ENCODE measurements at regions of chr2 and their contacts with region 1.

Region 1: DNA sequence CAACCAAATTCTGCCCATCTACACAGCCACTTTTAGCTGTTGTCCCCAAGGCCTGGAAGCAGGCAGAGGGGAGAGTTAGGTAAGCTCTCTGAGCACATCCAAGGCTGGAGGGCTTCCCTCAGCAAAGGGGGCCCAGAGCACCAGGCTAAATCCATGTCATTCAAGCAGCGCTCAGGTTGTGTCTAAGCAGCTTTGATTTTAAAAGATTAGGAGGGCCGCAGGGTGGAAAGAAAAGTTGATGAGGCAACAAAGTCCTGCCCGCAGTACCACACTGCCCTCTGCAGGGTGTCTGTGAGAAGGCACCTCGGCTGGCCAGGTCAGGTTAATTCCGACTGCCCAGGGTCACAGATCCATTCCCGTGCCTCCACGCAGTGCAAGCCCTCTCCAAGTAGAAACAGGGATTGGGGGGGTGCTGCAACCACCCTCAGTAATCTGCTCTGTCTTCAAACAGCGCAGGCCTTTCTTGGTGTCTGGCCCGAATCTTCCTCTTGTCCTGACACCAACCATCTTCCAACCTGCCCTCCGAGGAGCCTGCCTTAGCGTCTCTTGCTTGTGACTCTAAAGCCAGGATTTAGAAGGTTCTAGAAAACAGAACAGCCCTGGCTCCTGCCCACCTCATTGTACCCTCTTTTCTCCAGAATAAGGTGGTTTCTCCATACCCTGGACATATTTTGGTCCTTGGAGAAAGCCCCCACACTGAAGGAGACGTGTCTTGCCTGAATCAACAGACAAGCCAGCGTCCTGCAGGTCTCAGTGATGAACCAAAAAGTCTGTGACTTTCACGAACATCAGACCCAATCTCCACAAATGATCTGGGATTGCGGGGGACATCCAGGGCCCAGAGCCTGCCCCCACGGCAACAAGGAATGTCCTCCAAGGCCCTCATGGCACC is 289.2 kb downstream of the TNS1 start:
- DNase-seq: no peak
- ATAC-seq: peak; percentile 91
- H3K4me3 ChIP-seq: no peak overlapping the region
- H3K27ac ChIP-seq: no peak overlapping the region
- H3K4me1 ChIP-seq: no peaks in the 10 kb centered on the region
- H3K27me3 ChIP-seq: peaks cover 2 to 3% of the 10 kb centered on the region in 2 experiments; a peak in 3 of 4 replicates
- CTCF ChIP-seq: peak; percentile 81 to 96 (median 91)
- EP300 ChIP-seq: no peak
- POLR2A ChIP-seq: no peak
- RAD21 ChIP-seq: peak; percentile 95

Region 2: DNA sequence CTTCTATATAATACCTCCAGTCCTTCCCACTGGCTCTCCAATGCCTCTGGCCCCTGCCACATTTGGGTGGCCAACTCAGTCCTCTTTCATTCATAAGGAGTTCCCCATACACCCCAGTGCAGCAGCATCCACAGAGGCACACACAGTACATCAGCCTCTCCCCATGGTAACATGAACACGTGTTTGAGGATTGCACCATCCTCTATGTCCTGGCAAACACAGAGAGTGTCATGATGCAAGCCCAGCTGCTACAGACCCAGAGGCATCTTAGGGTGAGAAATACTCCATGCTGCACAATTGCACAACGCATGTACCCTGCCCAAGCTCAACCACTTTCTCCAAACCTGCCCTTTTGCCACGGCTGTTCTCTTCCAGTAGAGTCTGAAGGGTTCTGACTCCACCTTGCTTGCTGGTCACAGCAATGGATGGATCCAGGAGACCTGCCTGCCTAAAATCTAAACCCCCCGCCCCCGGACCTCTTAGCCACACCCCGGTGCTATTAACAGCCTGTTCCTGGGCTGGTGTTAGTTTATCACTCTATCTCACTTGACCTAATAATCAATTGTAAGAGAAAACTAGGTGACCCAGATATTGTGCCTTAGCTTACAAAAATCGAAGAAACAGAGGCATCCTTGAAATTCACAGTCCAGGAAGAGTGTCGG is 1029.7 kb before region 1 on chr2:
- CTCF ChIA-PET with region 1: interaction called, 5 read pairs
- POLR2A ChIA-PET with region 1: no interaction called
- RAD21 ChIA-PET with region 1: interaction called, 3 read pairs
- SMC1A ChIA-PET with region 1: interaction called, 3 read pairs
- in situ Hi-C with region 1: loop called (anchors 5 kb)
- intact Hi-C with region 1: loop called (anchors 1 kb)
- DNase-seq: no peak
- ATAC-seq: no peak
- H3K4me3 ChIP-seq: no peak overlapping the region
- H3K27ac ChIP-seq: no peak overlapping the region
- H3K4me1 ChIP-seq: no peaks in the 10 kb centered on the region
- H3K27me3 ChIP-seq: no peaks in the 10 kb centered on the region; a peak in 2 of 4 replicates
- CTCF ChIP-seq: no peak
- EP300 ChIP-seq: no peak
- POLR2A ChIP-seq: no peak
- RAD21 ChIP-seq: no peak

Region 3: DNA sequence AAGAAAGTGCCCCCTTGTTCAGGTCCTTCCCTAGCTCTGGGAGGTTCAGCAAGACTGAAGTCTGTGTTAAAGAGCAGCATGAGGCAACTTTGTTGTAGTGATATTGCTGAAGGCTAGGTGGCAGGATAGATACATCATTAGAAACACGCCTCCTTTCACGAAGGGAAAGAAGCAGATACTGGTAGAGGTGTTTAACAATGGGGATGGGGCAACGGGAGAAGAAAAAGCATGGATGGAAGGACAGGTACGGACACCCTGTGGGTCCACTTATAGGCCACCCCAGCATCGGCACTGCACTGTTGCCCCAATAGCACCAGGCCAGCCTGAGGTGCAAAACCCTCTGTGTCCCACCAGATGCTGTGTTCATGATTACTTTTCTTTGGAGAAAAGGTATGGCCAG is 1014.7 kb before region 1 on chr2:
- CTCF ChIA-PET with region 1: no interaction called
- POLR2A ChIA-PET with region 1: no interaction called
- RAD21 ChIA-PET with region 1: interaction called, 3 read pairs
- SMC1A ChIA-PET with region 1: no interaction called
- in situ Hi-C with region 1: no loop called
- intact Hi-C with region 1: loop called (anchors 2 kb)
- DNase-seq: no peak
- ATAC-seq: peak; percentile 88
- H3K4me3 ChIP-seq: no peak overlapping the region
- H3K27ac ChIP-seq: no peak overlapping the region
- H3K4me1 ChIP-seq: no peaks in the 10 kb centered on the region
- H3K27me3 ChIP-seq: peaks cover 2 to 12% of the 10 kb centered on the region in 2 experiments; a peak in 3 of 4 replicates
- CTCF ChIP-seq: peak; percentile 60 to 78 (median 66); a peak in 5 of 6 replicates
- EP300 ChIP-seq: no peak
- POLR2A ChIP-seq: no peak
- RAD21 ChIP-seq: peak; percentile 75

Region 4: GRCh38 chr2:216777650-216778273 is 935.9 kb before region 1 on chr2:
- CTCF ChIA-PET with region 1: no interaction called
- POLR2A ChIA-PET with region 1: no interaction called
- RAD21 ChIA-PET with region 1: no interaction called
- SMC1A ChIA-PET with region 1: no interaction called
- in situ Hi-C with region 1: no loop called
- intact Hi-C with region 1: loop called (anchors 1 kb)
- DNase-seq: peak; percentile 27
- ATAC-seq: peak; percentile 100
- H3K4me3 ChIP-seq: no peak overlapping the region
- H3K27ac ChIP-seq: no peak overlapping the region
- H3K4me1 ChIP-seq: no peaks in the 10 kb centered on the region
- H3K27me3 ChIP-seq: peaks cover 0 to 4% of the 10 kb centered on the region in 2 experiments; a peak in 1 of 4 replicates
- CTCF ChIP-seq: peak; percentile 74 to 87 (median 82)
- EP300 ChIP-seq: no peak
- POLR2A ChIP-seq: no peak
- RAD21 ChIP-seq: peak; percentile 63

Region 5: DNA sequence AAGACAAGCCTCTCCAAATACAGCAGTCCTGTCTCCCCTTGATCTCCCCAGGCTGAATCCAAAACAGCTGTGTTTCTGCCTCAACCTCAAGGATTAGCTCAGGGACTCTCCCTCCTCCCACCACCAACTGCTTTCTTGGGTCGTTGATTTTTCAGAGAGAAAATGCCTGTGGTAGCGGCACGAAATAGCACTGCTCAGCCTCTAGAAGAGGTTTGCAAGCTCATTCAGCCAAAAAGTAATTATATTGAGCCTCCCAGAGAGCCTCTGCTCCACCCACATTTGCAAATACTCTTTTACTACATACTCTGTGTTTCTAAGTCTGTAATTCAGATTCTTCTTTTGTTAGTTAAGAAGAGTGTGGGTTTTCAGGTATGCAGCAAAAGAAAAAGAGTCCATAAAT is 457.4 kb before region 1 on chr2:
- CTCF ChIA-PET with region 1: no interaction called
- POLR2A ChIA-PET with region 1: no interaction called
- RAD21 ChIA-PET with region 1: no interaction called
- SMC1A ChIA-PET with region 1: no interaction called
- in situ Hi-C with region 1: no loop called
- intact Hi-C with region 1: no loop called
- DNase-seq: no peak
- ATAC-seq: no peak
- H3K4me3 ChIP-seq: no peak overlapping the region
- H3K27ac ChIP-seq: no peak overlapping the region
- H3K4me1 ChIP-seq: no peaks in the 10 kb centered on the region
- H3K27me3 ChIP-seq: no peaks in the 10 kb centered on the region
- CTCF ChIP-seq: no peak
- EP300 ChIP-seq: no peak
- POLR2A ChIP-seq: no peak
- RAD21 ChIP-seq: no peak

Region 6: GRCh38 chr2:217650716-217651360 is 62.8 kb before region 1 on chr2:
- CTCF ChIA-PET with region 1: interaction called, 34 read pairs
- POLR2A ChIA-PET with region 1: no interaction called
- RAD21 ChIA-PET with region 1: interaction called, 23 read pairs
- SMC1A ChIA-PET with region 1: interaction called, 22 read pairs
- in situ Hi-C with region 1: no loop called
- intact Hi-C with region 1: loop called (anchors 2 kb)
- DNase-seq: no peak
- ATAC-seq: peak; percentile 93
- H3K4me3 ChIP-seq: no peak overlapping the region
- H3K27ac ChIP-seq: no peak overlapping the region
- H3K4me1 ChIP-seq: no peaks in the 10 kb centered on the region
- H3K27me3 ChIP-seq: no peaks in the 10 kb centered on the region; a peak in 2 of 4 replicates
- CTCF ChIP-seq: peak; percentile 65 to 87 (median 79)
- EP300 ChIP-seq: no peak
- POLR2A ChIP-seq: no peak
- RAD21 ChIP-seq: peak; percentile 62

Region 7: DNA sequence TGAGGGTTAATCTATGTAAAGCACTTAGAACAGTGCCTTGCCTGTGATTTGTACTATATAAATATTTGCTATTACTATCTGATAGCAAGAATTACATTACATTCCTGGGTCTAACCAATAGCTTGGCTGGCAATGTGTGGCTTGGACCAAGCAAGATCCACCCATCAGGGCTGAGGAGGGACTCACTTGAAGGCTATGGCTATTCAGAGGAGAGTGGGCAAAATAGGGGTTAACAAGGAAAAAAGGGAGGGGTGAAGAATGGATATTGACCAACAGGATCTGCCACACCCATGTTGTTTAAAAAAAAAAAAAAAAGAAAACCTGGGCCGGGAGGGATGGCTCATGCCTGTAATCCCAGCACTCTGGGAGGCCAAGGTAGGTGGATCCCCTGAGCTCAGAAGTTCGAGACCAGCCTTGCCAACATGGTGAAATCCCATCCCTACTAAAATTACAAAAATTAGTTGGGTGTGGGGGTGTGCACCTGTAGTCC is 598.7 kb after region 1 on chr2:
- CTCF ChIA-PET with region 1: no interaction called
- POLR2A ChIA-PET with region 1: no interaction called
- RAD21 ChIA-PET with region 1: no interaction called
- SMC1A ChIA-PET with region 1: no interaction called
- in situ Hi-C with region 1: no loop called
- intact Hi-C with region 1: no loop called
- DNase-seq: no peak
- ATAC-seq: no peak
- H3K4me3 ChIP-seq: no peak overlapping the region
- H3K27ac ChIP-seq: no peak overlapping the region
- H3K4me1 ChIP-seq: no peaks in the 10 kb centered on the region; the same call in 1 of the 2 replicates
- H3K27me3 ChIP-seq: no peaks in the 10 kb centered on the region
- CTCF ChIP-seq: no peak
- EP300 ChIP-seq: no peak
- POLR2A ChIP-seq: no peak
- RAD21 ChIP-seq: no peak